B cell (primary cell): ENCODE measurements at regions of chr1 and their contacts with region 1.

Region 1: DNA sequence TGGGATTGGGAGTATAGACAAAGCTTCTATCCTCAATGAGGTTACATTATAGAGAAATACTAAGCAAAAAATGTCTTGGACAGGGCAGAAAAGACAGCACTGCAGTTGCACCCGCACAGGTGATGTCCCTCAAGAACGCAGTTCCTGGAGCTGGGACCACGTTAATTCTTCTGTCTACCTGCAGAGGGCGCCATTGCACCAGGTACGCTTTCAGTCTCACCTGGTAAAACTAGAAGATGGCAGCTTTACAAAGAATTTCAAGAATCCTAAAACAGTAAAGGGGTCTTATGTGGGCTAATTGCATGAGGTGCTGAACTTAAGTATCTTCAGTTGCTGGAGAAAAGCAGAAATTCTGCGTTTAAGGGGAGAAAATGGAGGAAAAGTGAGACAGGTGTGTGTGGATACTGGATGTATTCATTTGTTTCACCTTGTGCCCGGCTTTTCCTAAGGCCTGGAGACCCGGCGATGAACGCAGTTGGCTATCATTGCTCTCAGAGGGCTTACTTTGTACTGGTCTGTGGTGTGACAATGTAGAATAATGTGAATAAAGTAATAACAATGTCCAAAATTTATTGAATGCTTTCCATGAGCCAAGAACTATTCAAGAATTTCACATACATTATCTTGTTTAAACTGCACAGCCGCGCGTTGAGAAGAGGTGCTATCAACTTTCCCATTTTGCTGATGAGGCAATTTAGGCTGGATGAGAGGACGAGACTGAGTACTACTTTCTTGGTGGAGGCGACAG is 276.3 kb upstream of the GREM2 start:
- DNase-seq: peak; percentile 45
- ATAC-seq: no peak
- H3K4me3 ChIP-seq: no peak overlapping the region
- H3K4me3 Mint-ChIP-seq: no peak overlapping the region
- H3K27ac ChIP-seq: no peak overlapping the region
- H3K27ac Mint-ChIP-seq: no peak overlapping the region
- H3K4me1 ChIP-seq: no peaks in the 10 kb centered on the region
- H3K4me1 Mint-ChIP-seq: no peaks in the 10 kb centered on the region
- H3K27me3 ChIP-seq: no peaks in the 10 kb centered on the region
- H3K27me3 Mint-ChIP-seq: no peaks in the 10 kb centered on the region
- CTCF ChIP-seq: peak; percentile 73

Region 2: GRCh38 chr1:240337781-240338180 is 550.4 kb before region 1 on chr1:
- CTCF ChIA-PET with region 1: no interaction called
- POLR2A ChIA-PET with region 1: no interaction called
- intact Hi-C with region 1: no loop called
- DNase-seq: no peak
- ATAC-seq: no peak
- H3K4me3 ChIP-seq: no peak overlapping the region
- H3K4me3 Mint-ChIP-seq: no peak overlapping the region
- H3K27ac ChIP-seq: no peak overlapping the region
- H3K27ac Mint-ChIP-seq: no peak overlapping the region
- H3K4me1 ChIP-seq: no peaks in the 10 kb centered on the region
- H3K4me1 Mint-ChIP-seq: no peaks in the 10 kb centered on the region
- H3K27me3 ChIP-seq: no peaks in the 10 kb centered on the region
- H3K27me3 Mint-ChIP-seq: no peaks in the 10 kb centered on the region
- CTCF ChIP-seq: no peak

Region 3: GRCh38 chr1:240869071-240869470 is 19.1 kb before region 1 on chr1:
- CTCF ChIA-PET with region 1: no interaction called
- POLR2A ChIA-PET with region 1: no interaction called
- intact Hi-C with region 1: no loop called
- DNase-seq: no peak
- ATAC-seq: no peak
- H3K4me3 ChIP-seq: no peak overlapping the region
- H3K4me3 Mint-ChIP-seq: no peak overlapping the region
- H3K27ac ChIP-seq: no peak overlapping the region
- H3K27ac Mint-ChIP-seq: no peak overlapping the region
- H3K4me1 ChIP-seq: no peaks in the 10 kb centered on the region
- H3K4me1 Mint-ChIP-seq: no peaks in the 10 kb centered on the region
- H3K27me3 ChIP-seq: no peaks in the 10 kb centered on the region
- H3K27me3 Mint-ChIP-seq: no peaks in the 10 kb centered on the region
- CTCF ChIP-seq: no peak

Region 4: DNA sequence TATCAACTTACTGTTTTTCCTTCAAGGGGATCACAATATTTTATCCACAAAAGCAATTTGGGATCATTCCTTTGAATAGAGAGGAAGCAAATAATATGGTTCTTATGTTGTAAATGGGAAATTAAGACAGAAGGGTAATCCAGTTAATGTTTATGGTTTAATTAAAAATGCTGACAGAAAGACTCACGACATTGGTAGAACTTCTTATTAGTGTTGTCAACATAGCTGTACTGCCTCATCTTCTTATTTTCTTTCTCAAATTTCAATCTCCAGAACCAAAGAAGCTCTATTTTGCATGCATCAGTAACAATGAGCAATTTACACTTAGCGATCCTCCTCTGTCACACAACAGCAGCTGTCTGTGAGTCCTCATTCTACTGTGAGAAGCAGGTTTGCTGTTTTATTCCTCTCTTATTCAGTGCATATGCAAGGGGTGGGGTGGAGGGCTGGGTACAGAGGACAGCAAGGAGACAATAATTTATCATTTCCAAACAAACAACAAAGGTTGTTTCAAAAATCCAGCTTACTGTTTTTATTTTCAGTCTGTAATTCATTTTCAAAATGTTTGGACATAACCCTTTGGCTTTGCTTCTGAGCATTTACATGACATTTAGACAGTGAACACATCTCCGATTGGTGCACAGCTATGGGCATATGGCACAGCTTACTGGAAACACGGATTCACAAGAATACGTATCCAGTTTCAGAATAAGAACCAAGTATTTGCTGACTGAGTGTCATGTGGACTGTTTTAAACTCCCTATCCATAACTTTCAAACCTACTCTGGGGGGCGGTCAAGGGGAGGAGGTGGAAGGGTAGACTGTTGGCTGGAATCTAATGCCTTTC is 132.9 kb after region 1 on chr1:
- CTCF ChIA-PET with region 1: no interaction called
- POLR2A ChIA-PET with region 1: no interaction called
- intact Hi-C with region 1: no loop called
- DNase-seq: no peak
- ATAC-seq: no peak
- H3K4me3 ChIP-seq: no peak overlapping the region
- H3K4me3 Mint-ChIP-seq: no peak overlapping the region
- H3K27ac ChIP-seq: no peak overlapping the region
- H3K27ac Mint-ChIP-seq: no peak overlapping the region
- H3K4me1 ChIP-seq: no peaks in the 10 kb centered on the region
- H3K4me1 Mint-ChIP-seq: no peaks in the 10 kb centered on the region
- H3K27me3 ChIP-seq: no peaks in the 10 kb centered on the region
- H3K27me3 Mint-ChIP-seq: no peaks in the 10 kb centered on the region
- CTCF ChIP-seq: no peak

Region 5: GRCh38 chr1:241499910-241500309 is 611.7 kb after region 1 on chr1:
- CTCF ChIA-PET with region 1: no interaction called
- POLR2A ChIA-PET with region 1: no interaction called
- intact Hi-C with region 1: loop called (anchors 5 kb)
- DNase-seq: peak; percentile 14
- ATAC-seq: no peak
- H3K4me3 ChIP-seq: no peak overlapping the region
- H3K4me3 Mint-ChIP-seq: no peak overlapping the region
- H3K27ac ChIP-seq: no peak overlapping the region
- H3K27ac Mint-ChIP-seq: no peak overlapping the region
- H3K4me1 ChIP-seq: no peaks in the 10 kb centered on the region
- H3K4me1 Mint-ChIP-seq: no peaks in the 10 kb centered on the region
- H3K27me3 ChIP-seq: no peaks in the 10 kb centered on the region
- H3K27me3 Mint-ChIP-seq: no peaks in the 10 kb centered on the region
- CTCF ChIP-seq: peak; percentile 43